Posterior vena cava (tissue), 2 donors: ENCODE measurements at regions of chr19 and their contacts with region 1.

Region 1: DNA sequence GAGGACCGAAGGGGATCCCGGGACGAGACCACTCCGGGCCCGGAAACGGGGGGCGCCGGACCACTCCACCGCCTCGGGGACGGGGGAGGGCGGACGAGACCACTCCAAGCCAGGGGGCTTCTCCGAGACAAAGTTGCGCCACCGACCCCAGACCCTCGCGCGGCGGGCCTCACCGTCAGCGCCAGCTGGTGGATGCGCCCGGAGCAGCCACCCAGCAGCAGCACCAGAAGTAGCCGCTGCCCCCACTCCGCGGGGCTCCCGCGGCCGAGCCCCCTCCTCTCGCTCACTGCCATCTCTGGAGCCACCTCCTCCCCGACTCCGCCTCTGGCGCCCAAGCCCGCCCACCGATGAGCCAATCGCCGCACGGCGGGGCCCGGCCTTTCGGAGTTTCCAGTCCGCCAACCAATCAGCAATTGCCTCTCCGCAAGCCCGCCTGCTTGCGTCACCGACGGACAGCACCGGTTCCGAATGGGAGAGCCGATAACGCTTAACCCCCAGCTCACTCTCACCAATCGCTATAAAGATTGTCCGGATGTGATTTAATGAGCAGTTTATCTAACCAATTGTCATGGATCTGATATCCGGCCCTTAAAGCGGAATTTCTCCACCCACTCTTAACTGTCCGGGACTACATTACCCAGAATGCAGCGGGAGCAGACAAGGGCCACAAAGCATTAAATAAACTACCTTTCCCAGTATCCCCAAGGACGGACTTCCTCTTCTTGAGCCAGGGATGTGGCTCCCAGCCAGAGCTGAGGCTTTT is at the start of gene GPR108:
- DNase-seq: peak; percentile 100
- total RNA-seq, gene GPR108: 39.3 to 43.4 TPM

Region 2: DNA sequence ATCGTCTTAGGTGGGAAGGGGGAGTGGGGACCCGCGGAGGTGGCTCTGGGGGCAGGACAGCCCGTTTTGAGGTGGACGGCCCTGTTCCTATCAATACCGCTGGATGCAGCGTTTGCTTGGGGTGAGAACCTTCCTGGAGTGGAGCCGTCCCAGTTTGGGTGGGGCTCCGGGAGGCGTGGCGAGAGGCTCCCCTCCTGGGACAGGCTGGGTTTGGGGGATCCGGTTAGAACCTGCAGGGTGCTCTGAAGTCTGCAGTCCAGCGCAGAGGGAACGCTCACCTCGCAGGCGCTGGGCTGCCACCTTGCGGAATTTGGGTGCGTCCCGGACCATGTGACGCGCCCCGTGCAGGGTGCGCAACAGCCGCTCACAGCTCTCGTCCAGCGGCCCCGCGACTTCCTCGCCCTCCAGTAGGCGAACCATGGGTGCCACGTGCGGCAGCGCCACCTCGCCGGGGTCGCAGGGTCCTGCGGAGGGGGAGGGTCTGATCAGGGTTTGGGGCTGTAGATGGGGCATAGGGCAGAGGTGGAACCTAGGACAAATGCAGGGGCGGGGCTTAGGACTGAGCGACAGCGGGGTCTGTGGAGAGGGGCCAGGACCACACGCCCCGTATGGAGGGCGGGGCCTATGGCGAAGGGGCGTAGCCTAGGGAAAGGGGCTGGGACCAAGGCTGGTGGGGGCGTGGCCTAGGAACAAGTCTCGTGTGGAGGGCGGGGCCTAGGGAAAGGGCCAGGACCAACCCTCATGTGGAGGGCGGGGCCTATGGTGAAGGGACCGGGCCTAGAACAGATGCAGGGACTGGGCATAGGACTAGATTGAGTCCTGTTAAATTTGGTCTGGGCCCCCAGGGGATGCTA is 15.9 kb after region 1 on chr19:
- intact Hi-C with region 1: loop called in 1 of 2 experiments (anchors 1 kb)
- DNase-seq: peak; percentile 95

Region 3: DNA sequence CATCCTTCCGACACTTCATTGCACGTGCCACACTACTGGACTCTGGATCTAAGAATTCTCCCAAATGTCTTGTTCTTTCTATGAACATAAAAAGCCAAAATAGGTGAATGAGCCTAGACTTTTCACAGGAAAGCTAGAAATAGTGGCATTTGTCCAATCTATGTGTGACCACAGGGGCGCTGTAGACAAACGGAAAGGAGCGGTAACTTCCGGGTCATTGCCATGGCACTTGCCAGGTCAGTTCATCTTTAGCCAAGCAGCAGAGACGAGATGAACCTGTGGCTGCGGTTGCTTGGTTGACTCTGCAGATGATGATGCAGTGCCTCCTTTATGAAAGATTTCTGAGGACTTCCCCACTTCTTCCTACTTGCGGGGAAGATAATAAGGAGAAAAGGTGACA is 215.5 kb after region 1 on chr19:
- intact Hi-C with region 1: no loop called
- DNase-seq: no peak